H1 (cell line): ENCODE measurements at regions of chr3 and their contacts with region 1.

Region 1: GRCh38 chr3:11335056-11335608 is 62.9 kb downstream of the ATG7 start:
- DNase-seq: no peak
- H3K4me3 ChIP-seq: no peak overlapping the region
- H3K27ac ChIP-seq: no peak overlapping the region
- H3K4me1 ChIP-seq: no peaks in the 10 kb centered on the region
- H3K27me3 ChIP-seq: no peaks in the 10 kb centered on the region
- CTCF ChIP-seq: peak in 2 of 3 experiments; percentile 49 to 56; a peak in 2 of 4 replicates
- EP300 ChIP-seq: no peak
- POLR2A ChIP-seq: no peak
- RAD21 ChIP-seq: peak; percentile 75 to 77

Region 2: GRCh38 chr3:11236595-11237461 is 98.3 kb before region 1 on chr3:
- CTCF ChIA-PET with region 1: interaction called, 35 read pairs
- POLR2A ChIA-PET with region 1: no interaction called
- DNase-seq: peak; percentile 39 to 91
- H3K4me3 ChIP-seq: no peak overlapping the region
- H3K27ac ChIP-seq: no peak overlapping the region
- H3K4me1 ChIP-seq: peaks cover 0 to 4% (median 0%) of the 10 kb centered on the region in 4 experiments; a peak in 2 of 7 replicates
- H3K27me3 ChIP-seq: no peaks in the 10 kb centered on the region
- CTCF ChIP-seq: peak; percentile 65 to 86 (median 73)
- EP300 ChIP-seq: 0 out of 3 replicates have a peak, but pooled peaks of 1 of the 2 experiments have one; percentile 21
- POLR2A ChIP-seq: no peak
- RAD21 ChIP-seq: peak; percentile 70 to 80

Region 3: GRCh38 chr3:11323813-11324212 is 11.3 kb before region 1 on chr3:
- CTCF ChIA-PET with region 1: interaction called, 23 read pairs
- POLR2A ChIA-PET with region 1: no interaction called
- DNase-seq: no peak
- H3K4me3 ChIP-seq: no peak overlapping the region
- H3K27ac ChIP-seq: no peak overlapping the region
- H3K4me1 ChIP-seq: no peaks in the 10 kb centered on the region
- H3K27me3 ChIP-seq: no peaks in the 10 kb centered on the region
- CTCF ChIP-seq: no peak
- EP300 ChIP-seq: no peak
- POLR2A ChIP-seq: no peak
- RAD21 ChIP-seq: no peak

Region 4: DNA sequence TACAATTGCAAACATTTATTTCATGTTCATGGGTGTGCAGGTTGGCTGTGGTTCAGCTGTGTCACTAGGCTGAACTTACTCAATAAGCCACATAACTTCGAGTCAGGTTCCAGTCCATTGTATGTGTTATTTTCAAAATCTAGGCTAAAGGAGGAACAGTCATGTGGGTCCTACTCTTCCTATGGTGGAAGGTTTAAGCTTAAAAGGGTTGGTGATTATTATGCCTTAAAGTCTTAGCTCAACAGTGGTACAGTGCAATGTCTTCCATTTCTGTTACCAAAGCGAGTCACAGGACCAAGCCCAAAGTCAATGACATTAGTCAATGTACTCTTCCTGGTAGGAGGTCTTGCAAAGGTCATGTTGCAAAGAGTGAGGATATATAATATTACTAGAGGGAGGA is 15.2 kb after region 1 on chr3:
- CTCF ChIA-PET with region 1: interaction called, 14 read pairs
- POLR2A ChIA-PET with region 1: no interaction called
- DNase-seq: no peak
- H3K4me3 ChIP-seq: no peak overlapping the region
- H3K27ac ChIP-seq: no peak overlapping the region
- H3K4me1 ChIP-seq: no peaks in the 10 kb centered on the region
- H3K27me3 ChIP-seq: no peaks in the 10 kb centered on the region
- CTCF ChIP-seq: no peak
- EP300 ChIP-seq: no peak
- POLR2A ChIP-seq: no peak
- RAD21 ChIP-seq: no peak